IMR-90 (cell line): ENCODE measurements at regions of chr18 and their contacts with region 1.

Region 1: DNA sequence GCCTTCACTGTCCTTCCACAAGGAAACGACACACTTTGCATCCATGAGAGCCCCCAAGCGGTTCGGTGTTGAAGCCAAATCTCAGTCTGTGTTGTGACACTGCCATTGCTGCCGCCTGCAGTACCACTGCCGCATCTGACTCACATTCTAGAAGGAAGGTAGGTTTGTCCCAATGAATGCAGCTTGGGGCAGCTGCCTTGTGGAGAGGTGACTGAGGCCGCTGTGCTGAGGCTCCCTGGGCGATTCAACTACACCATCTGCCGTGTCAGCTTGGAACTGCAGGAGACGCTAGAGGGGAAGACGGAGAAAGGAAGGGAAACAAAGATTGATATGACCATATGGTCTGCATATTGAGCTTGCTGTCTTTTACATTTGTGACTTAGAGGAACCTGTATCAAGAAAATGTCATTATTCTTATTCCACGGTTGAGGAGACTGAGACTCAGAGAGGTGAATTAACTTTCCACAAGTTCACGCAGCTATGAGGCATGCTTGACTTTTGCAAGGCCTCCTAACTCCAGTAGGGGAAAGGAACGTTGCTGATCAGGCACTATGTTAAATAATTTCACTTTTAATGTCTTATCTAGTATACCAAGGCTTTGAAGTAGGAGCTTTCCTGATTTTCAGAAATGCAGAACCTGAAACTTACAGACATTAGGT is 43.5 kb upstream of the LMAN1 start:
- DNase-seq: peak; percentile 68
- ATAC-seq: peak; percentile 100
- H3K4me3 ChIP-seq: no peak overlapping the region
- H3K27ac ChIP-seq: no peak overlapping the region
- H3K4me1 ChIP-seq: no peaks in the 10 kb centered on the region
- H3K27me3 ChIP-seq: no peaks in the 10 kb centered on the region
- CTCF ChIP-seq: peak; percentile 91
- POLR2A ChIP-seq: no peak
- RAD21 ChIP-seq: peak; percentile 96

Region 2: DNA sequence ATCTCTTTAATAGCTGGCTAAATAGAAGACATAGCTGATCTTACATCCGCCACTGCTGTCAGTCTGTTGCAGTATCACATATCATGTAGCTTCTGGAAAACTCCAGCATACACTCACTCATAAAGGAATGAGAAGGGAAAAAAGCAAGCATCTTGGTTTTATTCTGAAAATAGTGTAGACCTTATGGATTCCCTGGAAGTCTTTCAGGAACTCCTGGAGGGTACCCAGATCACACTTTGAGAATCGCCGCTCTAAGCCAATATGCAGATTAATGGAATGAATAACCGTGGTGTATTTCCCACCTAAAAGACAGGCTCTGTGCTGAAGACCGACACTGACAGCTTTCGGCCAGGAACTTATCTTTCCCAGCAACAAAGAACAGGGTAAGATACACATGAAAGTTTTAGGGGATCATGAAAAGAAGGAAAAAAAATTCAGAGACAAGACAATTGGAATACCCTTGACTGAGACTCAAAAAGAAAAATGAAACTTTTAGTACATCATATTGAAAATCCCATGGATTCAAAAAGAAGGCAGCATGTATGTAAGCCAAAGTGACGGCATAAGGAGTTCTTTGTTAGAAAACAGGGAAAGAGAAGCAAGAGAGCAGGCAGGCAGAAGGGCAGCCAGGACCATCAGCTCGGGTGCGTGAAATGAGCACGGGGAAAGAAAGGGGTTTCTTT is 319.3 kb before region 1 on chr18:
- CTCF ChIA-PET with region 1: interaction called, 4 read pairs
- POLR2A ChIA-PET with region 1: no interaction called
- dilution Hi-C with region 1: no loop called
- in situ Hi-C with region 1: no loop called
- intact Hi-C with region 1: loop called (anchors 5 kb)
- DNase-seq: no peak
- ATAC-seq: no peak
- H3K4me3 ChIP-seq: no peak overlapping the region
- H3K27ac ChIP-seq: no peak overlapping the region
- H3K4me1 ChIP-seq: no peaks in the 10 kb centered on the region; the same call in 1 of the 2 replicates
- H3K27me3 ChIP-seq: peaks cover 25% of the 10 kb centered on the region
- CTCF ChIP-seq: no peak
- POLR2A ChIP-seq: no peak
- RAD21 ChIP-seq: no peak

Region 3: GRCh38 chr18:59300676-59301285 is 101.8 kb before region 1 on chr18:
- CTCF ChIA-PET with region 1: interaction called, 21 read pairs
- POLR2A ChIA-PET with region 1: no interaction called
- dilution Hi-C with region 1: no loop called
- in situ Hi-C with region 1: loop called (anchors 5 kb)
- intact Hi-C with region 1: no loop called
- DNase-seq: no peak
- ATAC-seq: no peak
- H3K4me3 ChIP-seq: no peak overlapping the region
- H3K27ac ChIP-seq: no peak overlapping the region
- H3K4me1 ChIP-seq: no peaks in the 10 kb centered on the region
- H3K27me3 ChIP-seq: peaks cover 63% of the 10 kb centered on the region
- CTCF ChIP-seq: no peak
- POLR2A ChIP-seq: no peak
- RAD21 ChIP-seq: no peak

Region 4: DNA sequence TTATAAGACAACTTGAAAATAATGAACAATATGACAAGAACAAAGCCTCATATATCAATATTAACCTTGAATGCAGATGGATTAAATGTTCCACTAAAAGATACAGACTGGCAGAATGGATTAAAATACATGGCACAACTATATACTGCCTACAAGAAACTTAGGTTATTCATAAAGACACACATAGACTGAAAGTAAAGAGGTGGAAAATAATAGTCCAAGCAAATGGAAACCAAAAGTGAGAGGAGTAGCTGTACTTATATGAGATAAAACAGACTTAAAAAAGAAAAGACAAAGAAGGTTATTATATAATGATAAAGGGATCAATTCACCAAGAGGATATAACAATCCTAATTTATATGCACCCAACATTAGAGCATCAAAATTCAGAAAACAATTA is 61.7 kb before region 1 on chr18:
- CTCF ChIA-PET with region 1: no interaction called
- POLR2A ChIA-PET with region 1: no interaction called
- dilution Hi-C with region 1: no loop called
- in situ Hi-C with region 1: no loop called
- intact Hi-C with region 1: no loop called
- DNase-seq: no peak
- ATAC-seq: no peak
- H3K4me3 ChIP-seq: no peak overlapping the region
- H3K27ac ChIP-seq: no peak overlapping the region
- H3K4me1 ChIP-seq: no peaks in the 10 kb centered on the region
- H3K27me3 ChIP-seq: no peaks in the 10 kb centered on the region
- CTCF ChIP-seq: no peak
- POLR2A ChIP-seq: no peak
- RAD21 ChIP-seq: no peak

Region 5: GRCh38 chr18:59606193-59607077 is 203.9 kb after region 1 on chr18:
- CTCF ChIA-PET with region 1: no interaction called
- POLR2A ChIA-PET with region 1: interaction called, 16 read pairs
- dilution Hi-C with region 1: no loop called
- in situ Hi-C with region 1: no loop called
- intact Hi-C with region 1: no loop called
- DNase-seq: peak; percentile 89
- ATAC-seq: peak; percentile 81
- H3K4me3 ChIP-seq: no peak overlapping the region
- H3K27ac ChIP-seq: peak overlapping the region; percentile 94; the same call in 1 of the 2 replicates
- H3K4me1 ChIP-seq: peaks cover 23% of the 10 kb centered on the region
- H3K27me3 ChIP-seq: no peaks in the 10 kb centered on the region
- CTCF ChIP-seq: no peak
- POLR2A ChIP-seq: no peak
- RAD21 ChIP-seq: no peak

Region 6: DNA sequence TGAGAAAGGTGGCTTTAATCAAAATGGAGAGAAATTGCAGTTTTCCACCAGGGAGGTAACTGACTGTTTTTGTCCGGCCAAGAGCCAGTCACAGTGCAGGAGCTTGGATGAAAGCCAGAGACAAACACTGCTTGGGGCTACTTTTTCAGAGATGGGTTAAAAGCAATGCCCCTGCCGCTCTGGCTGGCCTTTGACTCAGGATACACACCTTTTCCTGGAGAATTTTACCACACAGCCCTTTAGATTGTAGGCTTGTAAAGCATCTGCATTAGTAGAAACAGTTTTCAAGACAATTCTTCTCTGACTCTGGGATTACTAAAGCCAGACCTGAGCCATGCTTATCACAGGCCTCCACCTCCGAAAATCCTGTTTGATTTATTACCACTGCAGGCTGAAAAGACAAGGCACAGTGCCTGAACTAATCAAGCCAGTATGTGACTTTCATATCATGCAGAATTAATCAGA is 214.9 kb after region 1 on chr18:
- CTCF ChIA-PET with region 1: no interaction called
- POLR2A ChIA-PET with region 1: no interaction called
- dilution Hi-C with region 1: no loop called
- in situ Hi-C with region 1: no loop called
- intact Hi-C with region 1: no loop called
- DNase-seq: no peak
- ATAC-seq: no peak
- H3K4me3 ChIP-seq: no peak overlapping the region
- H3K27ac ChIP-seq: no peak overlapping the region
- H3K4me1 ChIP-seq: peaks cover 6% of the 10 kb centered on the region
- H3K27me3 ChIP-seq: no peaks in the 10 kb centered on the region
- CTCF ChIP-seq: no peak
- POLR2A ChIP-seq: no peak
- RAD21 ChIP-seq: no peak